HepG2 (cell line): ENCODE measurements at regions of chr9 and their contacts with region 1.

Region 1: DNA sequence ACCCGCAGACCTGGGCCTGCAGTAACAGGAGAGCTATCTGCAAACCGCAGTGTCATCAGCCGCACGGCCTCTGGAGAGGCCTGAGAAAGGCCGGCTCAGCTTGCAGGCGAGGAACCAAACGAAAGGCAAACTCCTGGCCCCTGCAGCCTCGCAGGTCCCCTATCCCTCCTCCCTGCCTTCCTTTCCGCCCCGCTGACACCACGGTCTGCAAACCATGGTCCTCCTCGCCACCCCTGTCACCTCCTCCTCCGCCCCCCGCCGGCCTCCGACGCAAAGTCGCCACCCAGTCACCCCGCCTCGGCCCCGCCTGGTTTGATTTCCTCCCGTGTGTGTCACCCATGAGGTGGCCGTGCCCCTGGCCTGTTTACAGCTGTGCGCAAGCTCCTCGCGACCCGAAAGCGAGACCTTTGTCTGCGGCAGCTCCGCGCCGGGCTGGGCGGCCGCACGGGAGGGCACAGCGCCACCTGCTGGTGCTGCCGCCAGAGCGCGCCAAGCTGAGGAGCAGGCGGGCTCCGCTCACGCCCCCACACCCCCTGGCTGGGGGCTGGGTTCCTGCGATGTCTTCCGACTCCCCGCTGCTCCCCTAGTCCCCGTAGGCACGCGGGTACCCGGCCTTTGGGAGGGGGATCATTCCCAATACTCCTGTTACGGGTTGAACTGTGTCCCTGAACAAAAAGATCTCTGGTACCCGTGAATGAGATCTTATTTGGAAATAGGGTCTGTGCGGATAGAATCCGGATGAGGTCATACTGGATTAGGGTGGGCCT is 19.4 kb downstream of the GBGT1 start:
- DNase-seq: peak; percentile 81
- ATAC-seq: peak; percentile 77
- H3K4me3 ChIP-seq: peak overlapping the region; percentile 37 to 73 (median 59); a peak in 5 of 6 replicates
- H3K27ac ChIP-seq: peak overlapping the region; percentile 54
- H3K4me1 ChIP-seq: peaks cover 69% of the 10 kb centered on the region
- H3K27me3 ChIP-seq: no peaks in the 10 kb centered on the region; a peak in 1 of 5 replicates
- CTCF ChIP-seq: peak; percentile 97
- EP300 ChIP-seq: 0 out of 4 replicates have a peak, but pooled peaks of 1 of the 2 experiments have one; percentile 19
- POLR2A ChIP-seq: 0 out of 4 replicates have a peak, but pooled peaks of 1 of the 2 experiments have one; percentile 31
- RAD21 ChIP-seq: peak; percentile 99

Region 2: DNA sequence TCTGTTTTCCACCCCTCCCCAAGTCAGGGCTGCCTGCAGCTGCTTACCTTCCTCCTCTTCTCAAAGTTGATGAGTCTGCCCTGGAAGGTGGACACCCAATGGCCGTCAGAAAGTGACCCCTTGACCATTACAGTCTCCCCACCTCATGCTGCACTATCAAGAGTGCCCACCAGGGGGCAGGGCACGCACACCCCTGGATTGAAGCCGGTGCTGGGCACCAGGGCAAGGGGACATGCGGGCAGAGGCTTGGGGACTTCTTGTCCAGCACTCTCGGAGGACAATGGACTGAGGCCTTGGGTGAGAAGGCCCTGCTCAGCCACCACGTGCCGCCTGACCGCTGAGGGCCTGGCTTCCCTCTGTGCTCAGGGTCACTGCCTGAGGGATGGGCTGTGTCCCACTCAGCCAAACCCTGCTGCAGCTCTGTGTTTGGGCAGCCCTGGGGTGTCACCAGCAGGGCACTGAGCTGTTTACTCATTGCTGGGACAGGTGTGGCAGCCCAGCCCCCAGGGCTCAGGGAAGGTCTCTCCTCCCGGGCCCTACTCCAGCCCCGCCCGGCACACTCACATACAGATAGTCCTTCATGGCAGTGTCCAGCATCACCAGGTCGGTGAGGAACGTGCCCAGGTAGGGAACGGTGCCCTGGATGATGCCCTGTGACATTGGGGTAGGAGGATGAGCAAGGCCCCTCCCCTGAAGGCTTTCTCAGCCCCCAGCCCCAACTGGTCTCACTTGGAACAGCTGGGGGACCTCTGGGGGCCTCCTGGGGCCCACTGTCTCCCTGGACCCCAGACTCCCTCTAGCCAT is 40.9 kb before region 1 on chr9:
- CTCF ChIA-PET with region 1: interaction called, 70 read pairs
- POLR2A ChIA-PET with region 1: interaction called, 3 read pairs
- in situ Hi-C with region 1: loop called (anchors 5 kb)
- intact Hi-C with region 1: loop called (anchors 1 kb)
- DNase-seq: peak; percentile 34
- ATAC-seq: peak; percentile 75
- H3K4me3 ChIP-seq: no peak overlapping the region
- H3K27ac ChIP-seq: no peak overlapping the region
- H3K4me1 ChIP-seq: no peaks in the 10 kb centered on the region
- H3K27me3 ChIP-seq: no peaks in the 10 kb centered on the region
- CTCF ChIP-seq: peak; percentile 98
- EP300 ChIP-seq: no peak
- POLR2A ChIP-seq: no peak
- RAD21 ChIP-seq: peak; percentile 93

Region 3: DNA sequence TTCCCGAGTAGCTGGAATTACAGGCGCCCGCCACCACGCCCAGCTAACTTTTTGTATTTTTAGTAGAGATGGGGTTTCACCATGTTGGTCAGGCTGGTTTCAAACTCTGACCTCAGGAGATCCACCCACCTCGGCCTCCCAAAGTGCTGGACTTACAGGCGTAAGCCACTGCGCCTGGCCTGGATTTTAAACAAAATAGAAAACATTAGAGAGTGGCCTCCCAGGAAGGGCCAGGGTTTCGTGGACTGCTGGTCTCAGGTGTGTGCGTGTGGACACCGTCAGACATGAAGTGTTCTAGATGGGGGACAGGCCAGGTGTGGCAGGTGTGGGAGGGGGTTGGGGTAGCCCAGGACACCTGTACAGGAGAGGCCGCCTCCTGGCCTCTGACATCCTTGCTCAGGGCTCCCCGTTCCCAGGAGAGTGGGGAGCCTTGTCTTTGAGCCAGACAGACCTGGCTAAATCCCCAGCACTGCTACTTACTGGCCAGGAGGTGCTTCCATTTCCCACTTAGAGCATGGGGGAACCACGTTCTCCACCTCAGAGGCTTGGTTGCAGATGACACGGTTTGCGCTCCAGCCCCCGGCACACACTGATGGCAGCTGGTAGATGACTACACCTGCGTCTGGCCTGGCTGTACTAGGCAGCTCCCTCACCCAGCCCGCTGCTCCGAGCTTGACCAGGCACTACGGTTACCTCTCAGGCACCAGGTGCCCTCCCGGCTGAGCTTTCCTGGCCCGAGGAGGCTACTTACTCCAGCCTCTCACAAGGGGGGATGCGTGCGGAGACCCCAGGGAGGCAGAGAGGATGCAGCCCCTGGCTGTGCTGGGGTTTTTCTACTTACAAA is 26.6 kb after region 1 on chr9:
- CTCF ChIA-PET with region 1: no interaction called
- POLR2A ChIA-PET with region 1: no interaction called
- in situ Hi-C with region 1: no loop called
- intact Hi-C with region 1: no loop called
- DNase-seq: no peak
- ATAC-seq: no peak; the same call in 2 of the 3 replicates
- H3K4me3 ChIP-seq: no peak overlapping the region
- H3K27ac ChIP-seq: no peak overlapping the region
- H3K4me1 ChIP-seq: no peaks in the 10 kb centered on the region
- H3K27me3 ChIP-seq: peaks cover 3 to 28% of the 10 kb centered on the region in 2 experiments; a peak in 4 of 5 replicates
- CTCF ChIP-seq: no peak
- EP300 ChIP-seq: no peak
- POLR2A ChIP-seq: no peak
- RAD21 ChIP-seq: no peak